CD14-positive monocyte (primary cell): ENCODE measurements at regions of chr19 and their contacts with region 1.

Region 1: GRCh38 chr19:47428177-47428894 is 9.0 kb upstream of the MEIS3 start:
- DNase-seq: peak; percentile 74 to 95 (median 78)
- H3K4me3 ChIP-seq: peak overlapping the region in 1 of 3 experiments; percentile 9
- H3K4me3 Mint-ChIP-seq: no peak overlapping the region
- H3K27ac ChIP-seq: no peak overlapping the region
- H3K27ac Mint-ChIP-seq: no peak overlapping the region
- H3K4me1 ChIP-seq: peaks cover 13 to 21% of the 10 kb centered on the region in 2 donors
- H3K4me1 Mint-ChIP-seq: peaks cover 7% of the 10 kb centered on the region
- H3K27me3 ChIP-seq: peaks cover 26 to 86% of the 10 kb centered on the region in 2 donors
- H3K27me3 Mint-ChIP-seq: peaks cover 29 to 60% (median 58%) of the 10 kb centered on the region in 3 donors
- CTCF ChIP-seq: no peak

Region 2: DNA sequence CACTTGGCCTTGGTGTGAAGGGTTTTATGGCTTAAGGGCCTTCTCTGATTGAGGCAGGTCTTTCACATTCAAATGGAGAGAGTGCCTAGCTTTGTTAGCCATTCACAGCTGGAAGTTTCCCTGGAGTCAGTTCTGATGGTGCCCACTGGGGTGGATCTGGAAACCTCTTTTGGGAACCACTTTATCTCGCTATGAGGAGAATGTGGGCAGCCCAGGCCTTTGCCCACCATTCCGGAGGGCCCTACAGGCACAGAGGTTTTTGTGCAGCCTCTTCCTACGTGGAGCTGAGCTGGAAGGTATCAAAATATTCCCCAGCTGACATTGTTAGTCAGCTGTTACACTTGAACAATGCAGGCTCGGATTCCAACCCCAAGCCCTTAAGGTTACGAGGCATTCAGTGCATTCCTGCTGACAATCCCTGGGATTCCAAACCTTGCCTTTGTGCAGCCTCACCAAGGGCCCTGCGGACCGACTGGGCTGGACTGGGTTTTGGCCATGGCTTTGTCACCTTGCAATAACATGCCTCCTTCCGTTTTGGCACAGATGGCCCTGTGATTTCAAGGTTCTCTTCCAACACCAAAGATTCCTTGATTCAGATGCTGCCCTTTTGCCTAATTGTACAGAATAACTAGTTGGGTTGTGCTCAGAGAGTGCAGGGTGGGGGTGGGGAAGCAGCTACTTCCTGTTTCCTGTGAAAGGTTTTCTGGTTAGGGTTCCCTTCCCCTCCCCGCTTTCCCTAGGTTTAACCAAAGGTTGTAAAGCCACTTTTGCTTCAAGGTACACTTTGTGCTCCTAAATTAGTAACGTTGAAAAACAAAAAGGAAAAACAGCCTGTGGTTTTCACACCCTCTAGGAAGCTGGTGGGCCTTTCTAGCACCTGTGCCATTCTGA is 270.7 kb before region 1 on chr19:
- intact Hi-C with region 1: loop called in 1 of 2 experiments (anchors 10 kb)
- DNase-seq: peak; percentile 37 to 60 (median 47)
- H3K4me3 ChIP-seq: peak overlapping the region in 1 of 3 experiments; percentile 59
- H3K4me3 Mint-ChIP-seq: peak overlapping the region; percentile 27 to 69
- H3K27ac ChIP-seq: peak overlapping the region; percentile 9 to 67
- H3K27ac Mint-ChIP-seq: peak overlapping the region in 6 of 7 donors; percentile 25 to 77 (median 66)
- H3K4me1 ChIP-seq: peaks cover 30 to 31% of the 10 kb centered on the region in 2 donors
- H3K4me1 Mint-ChIP-seq: peaks cover 35% of the 10 kb centered on the region
- H3K27me3 ChIP-seq: no peaks in the 10 kb centered on the region
- H3K27me3 Mint-ChIP-seq: peaks cover 0 to 3% (median 0%) of the 10 kb centered on the region in 3 donors
- CTCF ChIP-seq: no peak

Region 3: DNA sequence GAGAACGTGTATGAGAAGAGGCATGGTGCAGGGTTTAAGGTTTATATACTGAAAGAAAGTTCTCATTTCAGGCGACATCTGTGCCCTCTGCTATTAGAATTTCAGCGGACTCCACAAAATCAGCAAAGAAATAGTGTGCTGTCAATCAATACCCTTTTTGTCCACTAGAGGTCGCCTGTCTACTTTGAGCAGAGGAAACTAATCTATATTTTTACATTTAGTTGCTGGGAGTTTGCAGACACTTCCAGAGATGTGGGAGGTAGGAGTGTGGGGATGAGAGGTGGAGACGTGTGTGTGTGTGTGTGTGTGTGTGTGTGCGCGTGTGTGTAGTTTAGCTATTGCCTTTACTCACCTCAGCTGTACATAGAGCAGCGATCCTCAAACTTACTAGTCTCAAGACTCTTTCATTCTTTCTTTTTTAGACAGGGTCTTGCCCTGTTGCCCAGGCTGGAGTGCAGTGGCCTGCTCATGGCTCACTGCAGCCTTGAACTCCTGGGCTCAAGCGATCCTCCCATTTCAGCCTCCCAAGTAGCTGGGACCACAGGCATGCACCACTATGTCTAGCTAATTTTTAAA is 143.9 kb before region 1 on chr19:
- intact Hi-C with region 1: loop called (anchors 1 to 10 kb)
- DNase-seq: peak; percentile 47 to 59 (median 52)
- H3K4me3 ChIP-seq: no peak overlapping the region
- H3K4me3 Mint-ChIP-seq: no peak overlapping the region
- H3K27ac ChIP-seq: no peak overlapping the region
- H3K27ac Mint-ChIP-seq: peak overlapping the region in 1 of 7 donors; percentile 70
- H3K4me1 ChIP-seq: no peaks in the 10 kb centered on the region
- H3K4me1 Mint-ChIP-seq: peaks cover 7% of the 10 kb centered on the region
- H3K27me3 ChIP-seq: no peaks in the 10 kb centered on the region
- H3K27me3 Mint-ChIP-seq: peaks cover 0 to 3% (median 2%) of the 10 kb centered on the region in 3 donors
- CTCF ChIP-seq: peak; percentile 68

Region 4: GRCh38 chr19:47296036-47296435 is 132.3 kb before region 1 on chr19:
- intact Hi-C with region 1: loop called in 1 of 2 experiments (anchors 2 kb)
- DNase-seq: peak; percentile 77 to 88 (median 84)
- H3K4me3 ChIP-seq: no peak overlapping the region
- H3K4me3 Mint-ChIP-seq: peak overlapping the region in 1 of 2 donors; percentile 37
- H3K27ac ChIP-seq: no peak overlapping the region
- H3K27ac Mint-ChIP-seq: peak overlapping the region in 2 of 7 donors; percentile 57 to 84
- H3K4me1 ChIP-seq: peaks cover 12 to 15% of the 10 kb centered on the region in 2 donors
- H3K4me1 Mint-ChIP-seq: peaks cover 19% of the 10 kb centered on the region
- H3K27me3 ChIP-seq: no peaks in the 10 kb centered on the region
- H3K27me3 Mint-ChIP-seq: peaks cover 6 to 19% (median 8%) of the 10 kb centered on the region in 3 donors
- CTCF ChIP-seq: peak; percentile 81